IMR-90 (cell line): ENCODE measurements at regions of chr3 and their contacts with region 1.

Region 1: DNA sequence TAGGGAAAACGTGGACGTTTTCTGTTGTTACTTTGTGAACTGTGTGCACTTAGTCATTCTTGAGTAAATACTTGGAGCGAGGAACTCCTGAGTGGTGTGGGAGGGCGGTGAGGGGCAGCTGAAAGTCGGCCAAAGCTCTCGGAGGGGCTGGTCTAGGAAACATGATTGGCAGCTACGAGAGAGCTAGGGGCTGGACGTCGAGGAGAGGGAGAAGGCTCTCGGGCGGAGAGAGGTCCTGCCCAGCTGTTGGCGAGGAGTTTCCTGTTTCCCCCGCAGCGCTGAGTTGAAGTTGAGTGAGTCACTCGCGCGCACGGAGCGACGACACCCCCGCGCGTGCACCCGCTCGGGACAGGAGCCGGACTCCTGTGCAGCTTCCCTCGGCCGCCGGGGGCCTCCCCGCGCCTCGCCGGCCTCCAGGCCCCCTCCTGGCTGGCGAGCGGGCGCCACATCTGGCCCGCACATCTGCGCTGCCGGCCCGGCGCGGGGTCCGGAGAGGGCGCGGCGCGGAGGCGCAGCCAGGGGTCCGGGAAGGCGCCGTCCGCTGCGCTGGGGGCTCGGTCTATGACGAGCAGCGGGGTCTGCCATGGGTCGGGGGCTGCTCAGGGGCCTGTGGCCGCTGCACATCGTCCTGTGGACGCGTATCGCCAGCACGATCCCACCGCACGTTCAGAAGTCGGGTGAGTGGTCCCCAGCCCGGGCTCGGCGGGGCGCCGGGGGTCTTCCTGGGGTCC is at the start of gene TGFBR2:
- DNase-seq: peak; percentile 99
- ATAC-seq: peak; percentile 95
- H3K4me3 ChIP-seq: peak within 1 kb of the TSS; percentile 84
- H3K27ac ChIP-seq: peak within 1 kb of the TSS; percentile 96
- H3K4me1 ChIP-seq: peaks cover 6% of the 10 kb centered on the region
- H3K27me3 ChIP-seq: no peaks in the 10 kb centered on the region
- CTCF ChIP-seq: peak; percentile 39
- POLR2A ChIP-seq: peak; percentile 41; the same call in 1 of the 2 replicates
- RAD21 ChIP-seq: peak; percentile 50
- total RNA-seq, gene TGFBR2: 87.5 and 89.7 TPM in 2 replicates

Region 2: GRCh38 chr3:30112902-30113484 is 493.5 kb before region 1 on chr3:
- CTCF ChIA-PET with region 1: no interaction called
- POLR2A ChIA-PET with region 1: no interaction called
- dilution Hi-C with region 1: no loop called
- in situ Hi-C with region 1: no loop called
- intact Hi-C with region 1: loop called (anchors 5 kb)
- DNase-seq: peak; percentile 59
- ATAC-seq: peak; percentile 78
- H3K4me3 ChIP-seq: no peak overlapping the region
- H3K27ac ChIP-seq: no peak overlapping the region
- H3K4me1 ChIP-seq: no peaks in the 10 kb centered on the region
- H3K27me3 ChIP-seq: no peaks in the 10 kb centered on the region; the same call in none of the 2 replicates
- CTCF ChIP-seq: peak; percentile 72
- POLR2A ChIP-seq: no peak
- RAD21 ChIP-seq: peak; percentile 82

Region 3: DNA sequence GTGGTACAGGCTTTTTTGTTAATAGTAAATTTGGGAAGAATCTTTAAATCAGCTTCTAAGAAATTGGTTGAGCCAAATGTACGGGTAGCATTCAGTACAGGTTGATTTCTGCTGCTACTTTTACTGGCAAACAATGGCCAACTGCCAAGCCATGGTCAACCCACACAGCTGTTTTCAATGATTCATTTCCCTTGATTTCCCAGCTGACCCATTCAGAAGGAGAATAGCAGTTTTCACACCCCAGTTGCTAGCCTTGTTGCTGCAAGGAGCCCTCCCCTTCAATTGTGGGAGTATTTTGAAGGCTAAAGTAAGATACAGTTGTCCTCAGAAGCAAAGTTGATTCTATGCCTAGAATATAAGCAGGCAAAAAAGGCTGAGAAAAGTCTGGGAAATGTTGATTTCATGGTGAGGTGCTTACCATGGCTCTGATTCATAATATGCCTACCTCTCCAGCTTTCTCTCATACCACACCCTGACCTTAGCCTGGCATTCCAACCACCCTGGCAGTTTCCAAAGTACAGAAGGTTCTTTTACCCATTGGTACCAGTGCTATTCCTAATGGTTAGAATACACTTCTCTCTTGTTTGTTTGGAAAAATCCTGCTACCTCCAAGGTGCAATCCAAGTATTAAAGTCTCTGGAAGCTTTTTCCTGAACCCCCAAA is 320.3 kb before region 1 on chr3:
- CTCF ChIA-PET with region 1: interaction called, 3 read pairs
- POLR2A ChIA-PET with region 1: no interaction called
- dilution Hi-C with region 1: no loop called
- in situ Hi-C with region 1: no loop called
- intact Hi-C with region 1: loop called (anchors 5 kb)
- DNase-seq: peak; percentile 88
- ATAC-seq: peak; percentile 43
- H3K4me3 ChIP-seq: no peak overlapping the region
- H3K27ac ChIP-seq: no peak overlapping the region
- H3K4me1 ChIP-seq: peaks cover 5% of the 10 kb centered on the region
- H3K27me3 ChIP-seq: no peaks in the 10 kb centered on the region
- CTCF ChIP-seq: no peak
- POLR2A ChIP-seq: no peak
- RAD21 ChIP-seq: peak; percentile 8; the same call in 1 of the 2 replicates

Region 4: GRCh38 chr3:30496066-30496966 is 110.2 kb before region 1 on chr3:
- CTCF ChIA-PET with region 1: no interaction called
- POLR2A ChIA-PET with region 1: no interaction called
- dilution Hi-C with region 1: no loop called
- in situ Hi-C with region 1: no loop called
- intact Hi-C with region 1: loop called (anchors 2 kb)
- DNase-seq: peak; percentile 81
- ATAC-seq: peak; percentile 79
- H3K4me3 ChIP-seq: no peak overlapping the region
- H3K27ac ChIP-seq: peak overlapping the region; percentile 74
- H3K4me1 ChIP-seq: peaks cover 16% of the 10 kb centered on the region
- H3K27me3 ChIP-seq: no peaks in the 10 kb centered on the region
- CTCF ChIP-seq: no peak
- POLR2A ChIP-seq: no peak
- RAD21 ChIP-seq: no peak

Region 5: DNA sequence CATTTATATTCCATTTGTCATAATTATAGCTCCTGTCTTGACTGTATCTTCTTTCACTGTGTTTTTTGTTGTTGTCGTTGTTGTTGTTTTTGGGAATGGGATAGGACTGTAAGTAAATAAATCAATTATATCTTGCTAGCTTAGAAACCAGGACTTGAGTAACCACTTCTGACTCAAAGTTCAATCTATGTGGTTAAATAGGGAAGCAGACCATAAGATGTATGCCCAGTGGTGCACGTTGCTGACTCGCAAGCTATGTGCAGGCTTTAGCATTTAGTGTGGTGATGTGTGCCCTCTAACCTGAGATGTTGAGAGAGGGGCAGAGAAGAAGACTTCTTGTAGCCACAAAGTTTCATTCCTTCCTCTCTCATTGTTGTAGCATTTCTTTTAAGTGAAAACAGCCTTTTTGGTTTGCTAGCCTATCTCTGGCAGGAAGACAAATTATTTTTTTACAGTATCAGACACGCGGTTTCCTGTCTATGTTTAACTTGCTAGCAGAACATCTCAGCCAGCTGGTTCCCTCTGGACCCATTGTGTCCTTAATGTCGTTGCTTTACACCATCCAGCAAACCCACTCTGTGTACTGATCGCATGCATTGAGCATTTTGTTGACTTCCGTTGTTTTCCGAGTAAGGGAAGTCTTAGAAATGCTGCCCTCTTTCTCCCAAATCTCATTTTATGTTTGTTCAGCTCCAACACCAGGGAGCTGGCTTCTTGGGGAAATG is 52.0 kb after region 1 on chr3:
- CTCF ChIA-PET with region 1: no interaction called
- POLR2A ChIA-PET with region 1: no interaction called
- dilution Hi-C with region 1: no loop called
- in situ Hi-C with region 1: no loop called
- intact Hi-C with region 1: loop called (anchors 2 kb)
- DNase-seq: peak; percentile 79
- ATAC-seq: peak; percentile 45
- H3K4me3 ChIP-seq: peak overlapping the region; percentile 11; the same call in 1 of the 2 replicates
- H3K27ac ChIP-seq: peak overlapping the region; percentile 93
- H3K4me1 ChIP-seq: peaks cover 29% of the 10 kb centered on the region
- H3K27me3 ChIP-seq: no peaks in the 10 kb centered on the region
- CTCF ChIP-seq: no peak
- POLR2A ChIP-seq: no peak
- RAD21 ChIP-seq: no peak